ENCODE measurements at regions of chr18 and their contacts with region 1.

Region 1: DNA sequence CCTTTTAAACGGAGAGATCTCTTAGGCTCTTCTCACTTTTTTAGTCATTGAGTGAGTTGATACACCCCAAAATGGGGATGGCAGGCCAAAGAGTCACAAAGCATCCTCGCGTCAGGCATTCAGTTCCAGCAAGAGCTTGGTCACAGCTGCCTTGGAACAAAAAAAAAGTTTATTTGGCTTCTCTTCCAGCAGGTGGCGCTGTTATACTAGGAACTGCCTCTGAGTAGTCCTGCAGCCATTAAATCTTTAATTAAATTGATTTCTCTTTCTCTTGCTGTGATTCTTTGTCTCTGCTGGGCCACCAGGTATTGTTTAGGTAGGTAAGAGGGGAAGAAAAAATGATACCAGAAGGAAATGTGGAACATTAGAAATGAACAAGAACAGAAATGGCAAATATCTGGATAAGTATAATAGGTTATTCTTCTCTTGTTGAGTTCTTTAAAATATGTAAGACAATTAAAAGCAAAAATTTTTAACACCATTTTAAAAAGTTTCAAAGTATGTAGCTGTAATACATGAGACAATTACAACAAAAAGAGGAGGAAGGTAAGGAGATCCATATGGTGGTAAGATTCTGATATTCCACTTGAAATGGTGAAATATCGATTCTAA is 175.1 kb downstream of the GALNT1 start:
- DNase-seq: peak; percentile 56
- H3K4me3 ChIP-seq: no peak overlapping the region
- H3K27ac ChIP-seq: no peak overlapping the region
- H3K4me1 ChIP-seq: no peaks in the 10 kb centered on the region
- CTCF ChIP-seq: peak; percentile 80

Region 2: GRCh38 chr18:35407871-35408481 is 348.6 kb before region 1 on chr18:
- CTCF ChIA-PET with region 1: no interaction called
- POLR2A ChIA-PET with region 1: no interaction called
- intact Hi-C with region 1: loop called (anchors 2 kb)
- DNase-seq: peak; percentile 68
- H3K4me3 ChIP-seq: no peak overlapping the region
- H3K27ac ChIP-seq: no peak overlapping the region
- H3K4me1 ChIP-seq: peaks cover 35% of the 10 kb centered on the region
- CTCF ChIP-seq: peak; percentile 80

Region 3: DNA sequence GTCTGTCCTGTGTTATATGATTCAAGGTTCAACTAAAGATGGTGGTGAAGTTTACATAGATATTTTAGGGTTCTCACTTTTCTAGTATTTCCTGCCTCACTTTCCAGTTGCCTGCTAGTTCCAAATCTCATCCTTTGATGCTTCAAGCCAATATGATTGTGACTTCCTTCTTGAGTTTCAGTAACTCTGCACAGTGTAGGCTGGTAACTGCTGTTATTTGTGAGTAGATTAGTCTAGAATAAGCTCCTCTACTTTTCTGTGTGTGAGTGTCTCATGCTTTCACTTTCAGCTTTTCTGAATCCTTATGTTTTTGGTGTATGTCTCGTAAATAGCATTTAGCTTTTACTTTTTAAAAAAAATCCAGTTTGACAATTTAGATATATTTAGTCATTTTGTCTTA is 132.5 kb before region 1 on chr18:
- CTCF ChIA-PET with region 1: no interaction called
- POLR2A ChIA-PET with region 1: no interaction called
- intact Hi-C with region 1: no loop called
- DNase-seq: peak; percentile 10
- H3K4me3 ChIP-seq: no peak overlapping the region
- H3K27ac ChIP-seq: no peak overlapping the region
- H3K4me1 ChIP-seq: peaks cover 19% of the 10 kb centered on the region
- CTCF ChIP-seq: no peak

Region 4: GRCh38 chr18:35661483-35662146 is 95.0 kb before region 1 on chr18:
- CTCF ChIA-PET with region 1: no interaction called
- POLR2A ChIA-PET with region 1: no interaction called
- intact Hi-C with region 1: no loop called
- DNase-seq: peak; percentile 10
- H3K4me3 ChIP-seq: no peak overlapping the region
- H3K27ac ChIP-seq: no peak overlapping the region
- H3K4me1 ChIP-seq: peaks cover 12% of the 10 kb centered on the region
- CTCF ChIP-seq: peak; percentile 67

Region 5: DNA sequence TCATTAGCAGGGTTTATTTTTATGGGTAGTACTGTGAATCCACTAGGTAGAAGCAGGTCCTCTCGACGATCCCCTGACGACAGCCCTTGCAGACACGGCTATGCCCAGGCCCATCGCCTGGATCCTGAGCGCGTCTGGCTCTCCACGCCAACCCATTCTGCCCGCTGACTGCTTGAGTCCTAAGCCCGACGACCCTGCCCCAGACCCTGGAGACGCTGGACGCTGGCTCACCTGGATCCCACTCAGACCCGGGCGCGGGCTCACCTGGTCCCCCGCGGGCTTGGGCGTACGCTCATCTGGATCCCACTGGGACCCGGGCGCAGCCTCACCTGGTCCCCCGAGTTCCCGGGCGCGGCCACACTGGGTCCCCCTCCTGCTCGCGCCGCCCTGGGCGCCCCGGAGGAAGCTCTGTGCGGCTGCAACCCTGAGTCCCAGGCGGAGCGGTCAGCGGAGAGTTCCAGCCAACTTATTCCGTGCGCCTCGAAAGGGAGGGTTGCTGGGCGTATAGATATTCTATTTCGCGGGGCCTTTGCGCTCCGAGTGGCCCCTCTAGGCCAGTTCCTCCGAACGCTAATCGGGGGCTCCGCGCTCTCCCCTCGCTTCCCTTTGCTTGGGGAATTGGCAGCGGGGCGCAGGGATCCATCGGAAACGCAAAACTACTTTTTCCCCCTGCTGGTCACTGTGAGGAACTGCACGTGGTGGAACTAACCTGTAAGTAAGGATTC is 193.5 kb after region 1 on chr18:
- CTCF ChIA-PET with region 1: no interaction called
- POLR2A ChIA-PET with region 1: no interaction called
- intact Hi-C with region 1: loop called (anchors 2 kb)
- DNase-seq: peak; percentile 30
- H3K4me3 ChIP-seq: no peak overlapping the region
- H3K27ac ChIP-seq: no peak overlapping the region
- H3K4me1 ChIP-seq: no peaks in the 10 kb centered on the region
- CTCF ChIP-seq: peak; percentile 73

Region 6: DNA sequence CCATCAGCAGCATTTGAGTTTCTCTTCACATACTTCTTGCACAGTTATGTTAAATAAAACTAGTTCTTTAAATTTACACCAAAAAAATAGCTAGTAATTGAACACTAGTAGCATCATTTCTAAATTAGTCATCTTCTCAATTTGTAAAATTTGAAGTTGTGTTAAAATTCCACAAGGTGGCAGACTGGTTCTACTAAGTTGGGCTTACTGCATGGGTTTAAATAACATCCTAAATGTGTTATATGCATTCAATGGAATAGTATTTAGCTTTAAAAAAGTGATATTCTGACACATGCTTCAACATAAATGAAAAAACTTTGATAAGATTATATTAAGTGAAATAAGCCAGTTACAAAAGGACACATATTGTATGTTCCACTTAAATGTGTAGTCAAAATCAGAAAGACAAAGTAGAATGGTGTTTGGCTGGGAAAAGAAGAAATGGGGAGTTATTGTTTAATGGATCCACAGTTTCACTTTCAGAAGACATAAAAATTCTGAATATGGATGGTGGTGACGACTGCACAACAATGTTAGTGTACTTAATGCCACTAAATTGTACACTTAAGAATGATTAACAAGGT is 339.4 kb after region 1 on chr18:
- CTCF ChIA-PET with region 1: no interaction called
- POLR2A ChIA-PET with region 1: no interaction called
- intact Hi-C with region 1: loop called (anchors 5 kb)
- DNase-seq: peak; percentile 58
- H3K4me3 ChIP-seq: no peak overlapping the region
- H3K27ac ChIP-seq: no peak overlapping the region
- H3K4me1 ChIP-seq: no peaks in the 10 kb centered on the region
- CTCF ChIP-seq: peak; percentile 78

Region 7: DNA sequence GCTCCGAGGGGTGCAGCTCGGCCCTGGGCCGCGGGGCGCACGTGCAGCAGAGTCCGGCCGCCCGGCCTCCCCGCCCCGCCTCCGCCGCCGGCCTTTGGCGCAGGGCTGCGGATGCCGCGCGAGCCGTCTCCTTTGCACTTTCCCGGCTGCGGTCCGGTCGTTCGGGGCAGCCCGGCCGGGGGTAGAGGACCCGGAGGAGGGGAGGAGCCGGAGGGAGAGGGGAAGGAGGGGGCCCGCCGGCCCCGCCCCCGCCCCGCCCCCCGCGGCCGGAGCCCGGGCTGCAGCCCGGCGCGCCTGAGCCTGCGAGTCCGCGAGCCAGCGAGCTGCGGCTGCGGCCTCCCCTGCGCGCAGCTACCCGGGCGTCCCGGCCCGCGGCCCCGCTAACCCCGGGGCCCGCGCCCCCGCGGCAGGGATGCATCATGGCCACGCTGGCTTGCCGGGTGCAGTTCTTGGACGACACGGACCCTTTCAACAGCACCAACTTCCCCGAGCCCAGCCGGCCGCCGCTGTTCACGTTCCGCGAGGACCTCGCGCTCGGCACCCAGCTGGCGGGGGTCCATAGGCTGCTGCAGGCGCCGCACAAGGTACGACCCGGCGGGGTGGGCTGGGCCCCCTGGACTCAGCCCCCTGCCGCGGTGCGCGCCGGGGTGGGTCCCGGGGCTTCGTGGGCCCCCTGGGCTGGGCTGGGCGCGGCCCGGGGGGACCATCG is 541.0 kb after region 1 on chr18 and contains the start of gene FHOD3:
- CTCF ChIA-PET with region 1: interaction called, 11 read pairs
- POLR2A ChIA-PET with region 1: no interaction called
- intact Hi-C with region 1: no loop called
- DNase-seq: no peak
- H3K4me3 ChIP-seq: no peak within 1 kb of the TSS
- H3K27ac ChIP-seq: no peak within 1 kb of the TSS
- H3K4me1 ChIP-seq: no peaks in the 10 kb centered on the region
- CTCF ChIP-seq: no peak
- total RNA-seq, gene FHOD3: 0.06 and 0.26 TPM in 2 replicates